ENCODE measurements at regions of chr1 and their contacts with region 1.

Region 1: GRCh38 chr1:53485478-53486394 is 26.5 kb downstream of the DMRTB1 start:
- DNase-seq: peak; percentile 36
- ATAC-seq: peak; percentile 94
- H3K4me3 ChIP-seq: no peak overlapping the region
- H3K27ac ChIP-seq: no peak overlapping the region
- H3K4me1 ChIP-seq: no peaks in the 10 kb centered on the region
- H3K27me3 ChIP-seq: peaks cover 3% of the 10 kb centered on the region; the same call in 1 of the 2 replicates
- CTCF ChIP-seq: peak; percentile 95

Region 2: GRCh38 chr1:53328009-53328461 is 157.7 kb before region 1 on chr1 and contains the start of gene LRP8:
- CTCF ChIA-PET with region 1: no interaction called
- POLR2A ChIA-PET with region 1: no interaction called
- in situ Hi-C with region 1: no loop called
- intact Hi-C with region 1: no loop called
- DNase-seq: no peak
- ATAC-seq: peak; percentile 74
- H3K4me3 ChIP-seq: peak within 1 kb of the TSS; percentile 63 to 74
- H3K27ac ChIP-seq: peak within 1 kb of the TSS; percentile 69
- H3K4me1 ChIP-seq: peaks cover 8% of the 10 kb centered on the region
- H3K27me3 ChIP-seq: no peaks in the 10 kb centered on the region
- CTCF ChIP-seq: no peak
- total RNA-seq, gene LRP8: 28.6 TPM

Region 3: DNA sequence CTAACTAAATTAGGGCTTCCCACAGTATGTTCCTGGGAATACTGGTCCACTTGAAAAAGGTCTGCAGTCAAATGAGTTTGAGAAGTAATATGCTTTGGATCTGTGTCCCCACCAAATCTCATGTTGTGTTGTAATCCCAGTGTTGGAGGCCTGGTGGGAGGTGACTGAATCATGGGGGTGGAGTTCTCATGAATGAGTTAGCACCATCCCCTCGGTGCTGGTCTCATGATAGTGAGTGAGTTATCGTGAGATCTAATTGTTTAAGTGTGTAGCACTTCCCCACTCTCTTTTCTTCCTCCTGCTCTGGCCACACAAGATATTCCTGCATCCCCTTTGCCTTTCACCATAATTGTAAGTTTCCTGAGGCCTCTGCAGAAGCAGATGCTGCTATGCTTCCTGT is 43.4 kb before region 1 on chr1:
- CTCF ChIA-PET with region 1: interaction called, 10 read pairs
- POLR2A ChIA-PET with region 1: no interaction called
- in situ Hi-C with region 1: no loop called
- intact Hi-C with region 1: no loop called
- DNase-seq: no peak
- ATAC-seq: no peak
- H3K4me3 ChIP-seq: no peak overlapping the region
- H3K27ac ChIP-seq: no peak overlapping the region
- H3K4me1 ChIP-seq: no peaks in the 10 kb centered on the region
- H3K27me3 ChIP-seq: no peaks in the 10 kb centered on the region
- CTCF ChIP-seq: no peak

Region 4: DNA sequence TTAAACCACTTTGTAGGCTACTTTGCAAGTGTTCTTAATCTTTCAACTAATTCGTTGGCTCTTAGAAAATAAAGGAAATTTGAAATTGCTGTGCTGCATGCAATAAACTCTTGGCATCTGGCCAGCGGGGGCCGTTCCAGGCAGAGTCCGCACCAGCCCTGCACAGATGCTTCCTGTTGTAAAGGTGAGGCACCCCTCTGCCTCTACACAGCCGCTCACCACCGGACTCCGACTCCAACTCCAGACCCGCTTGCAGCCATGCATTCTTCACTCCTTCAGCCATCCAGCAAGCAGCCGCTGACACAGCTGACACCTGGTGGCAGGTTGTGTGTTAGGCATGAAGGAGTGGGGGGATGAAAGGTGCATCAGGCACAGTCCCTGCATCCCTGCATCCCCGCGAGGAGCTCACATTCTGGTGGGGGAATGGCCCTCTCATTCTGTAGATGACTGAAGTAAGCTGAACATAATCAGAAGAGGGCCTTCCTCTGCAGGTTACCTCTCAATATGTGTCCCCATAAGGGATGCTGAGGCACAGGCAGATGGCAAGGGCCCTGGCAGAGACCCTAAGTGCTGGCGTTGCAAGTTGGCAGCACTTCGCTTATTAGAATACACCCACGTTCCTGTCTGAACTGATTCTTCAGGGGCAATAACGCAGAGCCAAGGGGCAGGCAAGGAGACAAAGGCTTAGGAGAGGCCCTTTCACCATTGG is 196.4 kb after region 1 on chr1:
- CTCF ChIA-PET with region 1: interaction called, 14 read pairs
- POLR2A ChIA-PET with region 1: no interaction called
- in situ Hi-C with region 1: no loop called
- intact Hi-C with region 1: loop called (anchors 5 kb)
- DNase-seq: no peak
- ATAC-seq: peak; percentile 57; the same call in 1 of the 2 replicates
- H3K4me3 ChIP-seq: no peak overlapping the region
- H3K27ac ChIP-seq: no peak overlapping the region
- H3K4me1 ChIP-seq: peaks cover 6% of the 10 kb centered on the region; the same call in 1 of the 2 replicates
- H3K27me3 ChIP-seq: no peaks in the 10 kb centered on the region; the same call in 1 of the 2 replicates
- CTCF ChIP-seq: peak; percentile 41; the same call in 1 of the 2 replicates

Region 5: DNA sequence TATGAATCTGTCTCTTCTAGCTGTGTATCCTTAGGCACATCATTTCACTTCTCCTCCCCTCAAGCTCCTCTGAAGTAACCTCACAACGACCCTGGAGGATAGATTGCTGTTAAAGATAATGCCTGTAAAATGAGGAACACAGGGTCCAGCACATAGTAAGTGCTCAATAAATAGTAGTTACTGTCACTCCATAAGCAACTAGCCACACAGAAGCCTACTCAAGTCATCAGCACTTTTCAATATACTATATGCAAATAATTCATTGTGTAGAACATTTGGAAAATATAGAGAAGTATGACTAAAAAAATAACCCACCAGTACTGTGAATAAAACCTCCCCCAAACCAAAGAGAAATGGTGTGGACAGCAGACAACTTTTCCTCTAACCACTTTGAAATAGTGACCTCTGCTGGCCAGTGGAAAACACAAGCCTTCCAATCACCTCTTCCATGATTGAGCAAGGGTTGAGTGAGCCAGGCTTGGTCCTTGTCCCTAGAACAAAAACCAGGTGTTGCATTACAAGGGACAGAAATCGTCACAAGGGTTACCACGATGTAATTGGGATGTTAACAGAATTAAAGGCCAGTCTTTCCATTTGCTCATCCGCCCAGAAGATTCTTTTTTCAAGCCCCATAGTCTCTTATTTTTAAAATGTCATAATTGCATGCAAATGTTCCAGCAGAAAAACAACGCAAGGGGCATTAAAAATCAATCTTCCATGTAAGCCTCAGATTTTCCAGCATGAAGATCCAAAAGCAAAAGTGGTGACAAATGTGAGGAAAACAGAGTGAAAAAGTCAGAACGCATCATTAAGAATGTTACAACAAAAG is 269.0 kb after region 1 on chr1:
- CTCF ChIA-PET with region 1: interaction called, 7 read pairs
- POLR2A ChIA-PET with region 1: no interaction called
- in situ Hi-C with region 1: no loop called
- intact Hi-C with region 1: loop called (anchors 1 kb)
- DNase-seq: no peak
- ATAC-seq: peak; percentile 83
- H3K4me3 ChIP-seq: no peak overlapping the region
- H3K27ac ChIP-seq: no peak overlapping the region
- H3K4me1 ChIP-seq: no peaks in the 10 kb centered on the region
- H3K27me3 ChIP-seq: 0 out of 2 replicates have a peak, but pooled peaks cover 3% of the 10 kb centered on the region
- CTCF ChIP-seq: peak; percentile 84